Heart right ventricle (tissue), 16 donors: ENCODE measurements at regions of chr4 and their contacts with region 1.

Region 1: DNA sequence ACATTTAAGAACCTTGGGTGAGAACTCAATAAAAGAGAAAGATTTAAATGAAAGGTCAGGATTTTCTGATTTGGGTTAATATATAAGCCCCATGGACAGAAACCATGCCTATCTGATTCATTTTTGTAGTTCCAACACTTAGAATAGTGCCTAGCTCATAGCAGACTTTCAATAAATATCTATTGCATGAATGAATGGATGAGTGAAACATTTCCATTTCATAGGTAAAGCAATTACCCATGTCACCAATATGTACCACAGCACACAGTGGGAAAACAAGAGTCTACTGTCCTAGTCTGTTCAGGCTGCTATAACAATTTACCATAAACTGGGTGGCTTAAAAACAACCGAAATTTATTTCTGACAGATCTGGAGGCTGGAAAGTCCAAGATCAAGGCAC is 63.9 kb upstream of the PTPN13 start:
- DNase-seq: no peak
- ATAC-seq: no peak
- H3K4me3 ChIP-seq: no peak overlapping the region
- H3K27ac ChIP-seq: no peak overlapping the region
- H3K4me1 ChIP-seq: no peaks in the 10 kb centered on the region
- H3K27me3 ChIP-seq: no peaks in the 10 kb centered on the region
- CTCF ChIP-seq: no peak

Region 2: GRCh38 chr4:86508436-86508835 is 21.7 kb before region 1 on chr4:
- intact Hi-C with region 1: loop called in 1 of 10 experiments (anchors 1 kb)
- DNase-seq: no peak
- ATAC-seq: no peak
- H3K4me3 ChIP-seq: peak overlapping the region in 4 of 10 donors; percentile 10 to 24 (median 13)
- H3K27ac ChIP-seq: peak overlapping the region in 3 of 10 donors; percentile 7 to 33 (median 14)
- H3K4me1 ChIP-seq: peaks cover 0 to 12% (median 0%) of the 10 kb centered on the region in 9 donors
- H3K27me3 ChIP-seq: no peaks in the 10 kb centered on the region
- CTCF ChIP-seq: no peak

Region 3: GRCh38 chr4:86757468-86757867 is 227.3 kb after region 1 on chr4:
- intact Hi-C with region 1: loop called in 1 of 10 experiments (anchors 10 kb)
- DNase-seq: no peak
- ATAC-seq: no peak
- H3K4me3 ChIP-seq: no peak overlapping the region
- H3K27ac ChIP-seq: no peak overlapping the region
- H3K4me1 ChIP-seq: no peaks in the 10 kb centered on the region
- H3K27me3 ChIP-seq: no peaks in the 10 kb centered on the region
- CTCF ChIP-seq: no peak